Posterior vena cava (tissue), 2 donors: ENCODE measurements at regions of chr13 and their contacts with region 1.

Region 1: GRCh38 chr13:97344265-97345175 is 89.4 kb upstream of the RAP2A start:
- DNase-seq: no peak

Region 2: GRCh38 chr13:97116754-97117153 is 227.8 kb before region 1 on chr13:
- intact Hi-C with region 1: loop called in 1 of 2 experiments (anchors 2 kb)
- DNase-seq: no peak

Region 3: DNA sequence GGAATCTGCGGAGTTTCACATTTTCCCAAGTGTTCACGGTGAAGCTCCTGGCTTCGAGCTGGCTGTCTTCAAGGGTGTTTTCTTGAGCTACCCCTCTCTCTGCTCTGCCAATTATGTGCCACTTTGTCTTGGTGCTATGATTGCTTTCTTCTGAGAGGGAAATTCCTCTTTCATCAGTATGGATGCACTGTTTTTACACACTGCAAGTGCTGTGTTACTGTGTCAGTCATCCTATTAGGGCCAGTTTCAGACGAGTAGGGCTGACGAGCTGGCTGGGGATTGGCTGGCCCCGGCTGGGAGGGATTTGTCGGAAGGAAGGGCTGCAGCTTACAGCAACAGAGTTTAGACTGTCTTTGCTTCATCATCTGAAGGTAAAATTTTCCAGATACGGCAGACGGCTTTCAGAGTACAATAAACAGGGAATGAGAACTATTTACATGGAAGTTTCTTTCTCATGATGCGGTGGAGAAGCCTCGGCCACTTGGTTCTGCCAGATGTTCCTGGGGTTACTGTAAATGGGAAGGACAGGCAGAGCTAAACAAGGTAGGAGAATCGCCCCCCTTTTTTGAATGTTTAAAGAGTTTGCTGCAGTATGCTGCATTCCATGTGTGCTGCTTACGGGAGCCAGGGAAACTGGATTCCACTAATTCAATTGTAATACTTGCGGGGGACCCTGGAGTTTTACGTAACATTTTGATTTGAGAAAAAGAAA is 122.4 kb before region 1 on chr13 and contains the start of gene MBNL2:
- intact Hi-C with region 1: loop called in 1 of 2 experiments (anchors 5 kb)
- DNase-seq: peak; percentile 96
- total RNA-seq, gene MBNL2: 106 to 139 TPM

Region 4: GRCh38 chr13:97275265-97275664 is 69.3 kb before region 1 on chr13:
- intact Hi-C with region 1: no loop called
- DNase-seq: no peak